Vagina (tissue), 2 donors: ENCODE measurements at regions of chr12 and their contacts with region 1.

Region 1: DNA sequence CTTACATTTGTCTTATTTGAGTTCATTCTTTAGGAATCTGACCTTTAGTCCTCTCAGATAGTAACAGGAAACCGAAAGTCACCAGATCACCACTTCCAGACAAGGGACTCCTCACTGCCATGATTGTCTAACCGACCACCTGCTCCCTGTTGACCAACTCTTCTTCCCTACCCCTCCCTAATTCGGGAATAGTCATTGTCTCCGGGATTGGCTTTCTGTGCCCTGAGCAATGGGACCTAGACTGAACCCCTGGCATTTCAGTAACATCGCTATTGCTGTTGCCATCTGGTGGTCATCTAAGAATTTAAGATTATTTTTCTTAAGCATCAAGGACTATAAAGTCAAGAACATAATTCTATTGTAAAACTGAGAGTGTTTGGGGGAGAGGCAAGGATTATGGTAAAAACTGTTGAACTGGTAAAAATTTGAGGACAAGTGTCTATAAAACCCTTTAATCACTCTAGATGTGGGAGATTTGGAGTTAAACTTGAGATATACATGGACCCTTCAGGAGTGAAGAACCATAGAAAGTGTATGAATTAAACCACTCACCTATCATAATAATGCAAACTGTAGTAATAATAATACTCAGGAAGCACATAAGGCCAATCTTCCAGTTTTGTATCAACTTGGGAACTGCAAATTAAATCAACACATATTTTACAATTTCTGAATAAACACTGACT is 6.3 kb downstream of the CLEC2A start:
- DNase-seq: no peak
- H3K4me3 ChIP-seq: no peak overlapping the region
- H3K27ac ChIP-seq: no peak overlapping the region
- H3K4me1 ChIP-seq: no peaks in the 10 kb centered on the region
- H3K27me3 ChIP-seq: no peaks in the 10 kb centered on the region
- CTCF ChIP-seq: peak; percentile 18 to 62 (median 53)
- POLR2A ChIP-seq: no peak

Region 2: DNA sequence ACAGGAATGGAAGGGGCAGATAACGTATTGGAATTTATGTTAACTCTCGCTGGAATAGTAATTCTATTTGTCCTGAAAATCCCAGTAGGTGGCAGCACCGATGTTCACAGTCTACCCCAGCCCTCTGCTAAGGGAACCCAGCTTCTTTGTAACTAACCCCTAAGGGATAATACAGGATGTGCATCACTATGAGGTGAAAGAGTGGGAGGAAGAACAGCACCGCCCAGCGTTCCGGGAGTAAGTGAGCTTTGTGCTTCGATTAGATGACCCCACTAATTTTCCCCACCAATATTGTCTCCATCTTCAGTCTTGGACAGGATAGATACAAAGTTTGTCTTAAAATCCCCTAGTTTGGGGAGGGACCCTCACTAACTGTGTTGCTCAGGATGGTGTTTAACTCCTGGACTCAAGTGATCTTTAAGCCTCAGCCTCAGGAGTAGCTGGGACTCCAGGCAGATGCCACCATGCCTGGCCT is 1992.6 kb before region 1 on chr12:
- intact Hi-C with region 1: no loop called
- DNase-seq: peak in 1 of 2 donors; percentile 90
- H3K4me3 ChIP-seq: peak overlapping the region; percentile 15 to 54
- H3K27ac ChIP-seq: peak overlapping the region; percentile 83
- H3K4me1 ChIP-seq: peaks cover 22% of the 10 kb centered on the region
- H3K27me3 ChIP-seq: no peaks in the 10 kb centered on the region
- CTCF ChIP-seq: peak; percentile 43 to 74 (median 50)
- POLR2A ChIP-seq: peak in 1 of 2 donors; percentile 27

Region 3: DNA sequence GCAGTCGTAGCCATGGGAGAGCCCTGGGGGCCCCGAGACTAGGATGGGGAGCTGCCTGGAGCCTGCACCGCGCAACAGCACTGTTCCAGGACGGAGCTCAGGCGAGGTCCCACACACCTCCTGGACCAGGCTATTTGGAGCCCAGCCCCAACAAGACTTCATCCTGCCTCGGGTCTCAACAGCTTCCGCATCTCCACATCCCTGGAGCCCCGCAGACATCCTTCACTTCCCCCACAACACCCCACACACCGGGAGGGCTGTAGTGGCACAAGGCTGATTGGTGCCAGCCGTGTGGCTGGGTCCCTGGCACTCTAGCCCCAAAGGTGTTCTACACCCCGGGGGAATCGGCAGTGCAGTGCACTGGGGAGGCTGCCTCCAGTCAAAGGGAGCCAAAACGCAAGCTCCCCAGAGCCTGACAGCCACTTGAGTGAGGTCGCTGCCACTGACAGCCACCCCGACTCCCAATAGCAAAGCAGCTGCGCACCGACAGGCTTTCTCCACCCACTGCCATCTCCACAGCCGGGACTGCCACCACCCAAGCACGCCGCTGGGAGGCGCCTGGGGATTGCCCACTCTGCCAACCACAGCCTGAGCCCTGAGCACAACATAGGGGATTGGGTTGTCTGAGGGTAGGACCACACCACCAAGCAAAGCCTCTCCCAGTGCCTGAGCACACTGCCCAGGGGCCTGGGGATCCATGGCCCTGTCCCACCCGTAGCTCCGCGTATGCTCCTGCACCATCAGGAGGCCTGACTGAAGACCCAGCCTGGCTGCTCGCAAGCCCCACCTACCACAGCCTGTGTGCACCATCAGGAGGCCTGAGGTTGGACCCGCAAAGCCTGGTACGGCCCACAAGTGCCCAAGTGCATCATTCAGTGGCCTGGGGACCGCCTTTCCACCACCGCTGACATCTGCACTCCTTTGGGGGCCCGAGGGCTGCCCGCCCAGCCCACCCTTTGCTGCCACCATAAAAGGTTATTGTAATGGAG is 111.7 kb before region 1 on chr12:
- intact Hi-C with region 1: loop called (anchors 5 kb)
- DNase-seq: no peak
- H3K4me3 ChIP-seq: peak overlapping the region in 1 of 2 donors; percentile 32
- H3K27ac ChIP-seq: no peak overlapping the region
- H3K4me1 ChIP-seq: no peaks in the 10 kb centered on the region
- H3K27me3 ChIP-seq: no peaks in the 10 kb centered on the region
- CTCF ChIP-seq: peak; percentile 34 to 70 (median 59)
- POLR2A ChIP-seq: no peak